ENCODE measurements at regions of chr18 and their contacts with region 1.

Region 1: DNA sequence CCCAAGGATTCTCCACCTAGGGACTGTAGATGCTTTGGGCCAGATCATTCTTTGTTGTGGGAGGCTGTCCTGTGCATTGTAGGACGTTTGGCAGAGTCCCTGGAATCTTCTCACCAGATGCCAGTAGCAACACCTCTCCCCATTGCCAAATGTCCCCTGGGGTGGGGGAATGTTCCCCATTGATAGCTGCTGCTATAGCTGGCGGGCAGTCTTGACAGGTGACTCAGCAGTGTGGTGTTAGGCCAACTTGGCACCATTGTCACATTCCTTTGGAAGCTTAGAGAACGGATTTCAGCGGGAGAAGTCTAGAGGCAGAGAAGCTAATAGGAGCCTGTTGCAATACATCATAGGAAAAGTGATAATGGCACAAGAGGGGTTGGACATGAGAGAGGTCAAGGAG is 495.7 kb upstream of the SMIM21 start:
- DNase-seq: peak; percentile 95
- H3K4me3 ChIP-seq: no peak overlapping the region
- H3K27ac ChIP-seq: peak overlapping the region; percentile 25 to 66 (median 40)
- H3K4me1 ChIP-seq: peaks cover 11 to 20% (median 17%) of the 10 kb centered on the region in 4 donors
- H3K27me3 ChIP-seq: no peaks in the 10 kb centered on the region
- CTCF ChIP-seq: no peak
- EP300 ChIP-seq: no peak
- POLR2A ChIP-seq: no peak

Region 2: DNA sequence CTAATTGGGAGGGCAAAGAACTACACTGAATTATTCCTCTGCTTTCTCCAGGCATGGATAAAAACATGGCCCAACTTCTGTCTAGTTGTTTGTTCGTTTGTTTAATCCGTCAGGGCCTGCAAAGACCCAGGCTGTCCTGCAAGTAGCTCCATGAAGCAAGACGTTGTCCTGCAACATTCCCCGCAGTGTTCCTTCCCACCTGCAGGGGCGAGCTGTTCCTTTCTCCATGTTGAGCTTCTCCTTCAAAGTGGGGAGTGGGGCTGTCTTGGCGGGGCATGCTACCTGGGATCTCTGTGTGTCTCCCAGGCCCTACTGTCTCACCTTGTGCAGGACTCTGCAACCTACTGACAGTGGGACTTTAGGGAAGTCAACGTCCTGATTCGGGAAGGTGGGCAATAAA is 231.7 kb before region 1 on chr18:
- intact Hi-C with region 1: no loop called
- DNase-seq: no peak
- H3K4me3 ChIP-seq: no peak overlapping the region
- H3K27ac ChIP-seq: no peak overlapping the region
- H3K4me1 ChIP-seq: peaks cover 0 to 13% (median 8%) of the 10 kb centered on the region in 4 donors
- H3K27me3 ChIP-seq: no peaks in the 10 kb centered on the region
- CTCF ChIP-seq: no peak
- EP300 ChIP-seq: no peak
- POLR2A ChIP-seq: no peak

Region 3: DNA sequence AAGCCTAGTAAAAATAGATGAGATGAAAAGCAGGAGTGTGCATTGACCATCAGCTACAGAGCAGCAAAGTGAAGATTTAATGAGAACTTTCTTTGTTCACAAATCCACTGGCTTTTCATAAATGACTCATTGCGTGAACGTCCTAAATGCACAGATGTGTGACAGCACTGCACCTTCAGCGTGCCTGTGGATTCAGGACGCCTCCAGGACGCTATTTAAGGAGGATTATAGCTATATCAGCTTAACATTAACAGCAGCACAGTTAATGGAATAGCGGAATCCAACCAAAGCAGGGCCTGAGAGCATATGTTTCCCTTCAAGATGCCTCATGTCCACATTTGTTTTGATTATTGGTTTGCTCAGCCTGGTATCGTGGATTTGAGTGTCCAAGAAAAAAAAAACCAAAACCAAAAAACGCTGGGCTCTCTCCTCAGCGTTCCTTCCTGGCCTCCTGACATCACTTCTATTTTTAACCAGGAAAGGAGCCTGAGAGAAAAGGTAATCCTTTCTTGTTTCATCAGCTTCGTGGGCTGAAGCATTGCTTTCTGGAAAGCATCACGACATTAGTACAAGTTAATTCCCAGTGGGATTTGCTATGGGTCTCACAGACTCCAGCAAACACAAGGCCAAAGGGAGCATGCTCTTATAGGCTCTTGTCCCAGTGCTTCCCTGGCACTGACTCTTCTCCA is 48.6 kb before region 1 on chr18:
- intact Hi-C with region 1: loop called (anchors 5 kb)
- DNase-seq: no peak
- H3K4me3 ChIP-seq: peak overlapping the region in 3 of 4 donors; percentile 12 to 31 (median 24)
- H3K27ac ChIP-seq: peak overlapping the region; percentile 74 to 82 (median 80)
- H3K4me1 ChIP-seq: peaks cover 5 to 39% (median 34%) of the 10 kb centered on the region in 4 donors
- H3K27me3 ChIP-seq: no peaks in the 10 kb centered on the region
- CTCF ChIP-seq: no peak
- EP300 ChIP-seq: no peak
- POLR2A ChIP-seq: no peak